MCF 10A (cell line): ENCODE measurements at regions of chr1 and their contacts with region 1.

Region 1: DNA sequence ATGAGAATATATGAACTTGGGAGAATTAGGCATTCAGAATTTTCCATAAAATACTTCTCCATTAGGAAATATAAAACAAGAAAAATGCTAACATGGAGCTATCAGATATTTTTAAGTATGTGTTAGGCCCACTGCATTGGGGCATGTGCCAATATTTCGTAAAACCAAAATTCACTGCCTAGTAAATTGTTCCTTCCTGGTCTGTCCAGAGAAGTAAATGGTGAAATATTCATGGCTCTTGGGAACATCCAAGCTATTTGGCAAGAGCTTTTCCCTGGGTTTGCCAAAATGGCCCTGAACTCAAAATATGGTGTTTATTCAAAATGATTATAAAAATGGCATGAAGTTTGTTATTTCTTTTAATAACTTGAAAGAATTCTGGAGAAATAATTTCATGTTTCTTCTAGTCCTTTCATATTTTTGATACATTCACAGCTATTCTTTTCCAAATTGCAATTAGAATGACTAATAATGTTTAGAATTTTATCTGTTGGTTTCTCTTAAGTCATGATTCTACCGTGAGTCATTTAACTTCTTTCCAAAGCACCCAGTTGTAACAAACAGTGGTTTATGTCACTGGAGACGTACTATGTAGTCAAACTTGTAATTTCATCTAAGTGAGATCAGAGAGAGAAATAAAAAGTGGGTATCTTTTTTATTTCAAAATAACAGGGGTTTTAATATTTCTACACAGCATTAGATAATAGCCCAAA is 25.7 kb upstream of the SLC19A2 start:
- DNase-seq: peak; percentile 86
- H3K4me3 Mint-ChIP-seq: peak overlapping the region; percentile 5
- H3K27ac Mint-ChIP-seq: peak overlapping the region; percentile 86
- H3K4me1 Mint-ChIP-seq: peaks cover 62% of the 10 kb centered on the region
- H3K27me3 Mint-ChIP-seq: no peaks in the 10 kb centered on the region
- CTCF ChIP-seq: no peak

Region 2: GRCh38 chr1:169288011-169288414 is 223.5 kb before region 1 on chr1:
- CTCF ChIA-PET with region 1: no interaction called
- POLR2A ChIA-PET with region 1: no interaction called
- intact Hi-C with region 1: no loop called
- DNase-seq: peak; percentile 18
- H3K4me3 Mint-ChIP-seq: no peak overlapping the region
- H3K27ac Mint-ChIP-seq: no peak overlapping the region
- H3K4me1 Mint-ChIP-seq: peaks cover 17% of the 10 kb centered on the region
- H3K27me3 Mint-ChIP-seq: no peaks in the 10 kb centered on the region
- CTCF ChIP-seq: no peak

Region 3: GRCh38 chr1:169495046-169495775 is 16.3 kb before region 1 on chr1:
- CTCF ChIA-PET with region 1: interaction called, 13 read pairs
- POLR2A ChIA-PET with region 1: interaction called, 56 read pairs
- intact Hi-C with region 1: no loop called
- DNase-seq: peak; percentile 31
- H3K4me3 Mint-ChIP-seq: no peak overlapping the region
- H3K27ac Mint-ChIP-seq: peak overlapping the region; percentile 52
- H3K4me1 Mint-ChIP-seq: peaks cover 18% of the 10 kb centered on the region
- H3K27me3 Mint-ChIP-seq: no peaks in the 10 kb centered on the region
- CTCF ChIP-seq: no peak

Region 4: GRCh38 chr1:169731446-169731845 is 220.0 kb after region 1 on chr1:
- CTCF ChIA-PET with region 1: no interaction called
- POLR2A ChIA-PET with region 1: no interaction called
- intact Hi-C with region 1: no loop called
- DNase-seq: peak; percentile 21
- H3K4me3 Mint-ChIP-seq: no peak overlapping the region
- H3K27ac Mint-ChIP-seq: no peak overlapping the region
- H3K4me1 Mint-ChIP-seq: no peaks in the 10 kb centered on the region
- H3K27me3 Mint-ChIP-seq: peaks cover 44% of the 10 kb centered on the region
- CTCF ChIP-seq: no peak

Region 5: GRCh38 chr1:169816622-169817021 is 305.1 kb after region 1 on chr1:
- CTCF ChIA-PET with region 1: no interaction called
- POLR2A ChIA-PET with region 1: no interaction called
- intact Hi-C with region 1: no loop called
- DNase-seq: no peak
- H3K4me3 Mint-ChIP-seq: no peak overlapping the region
- H3K27ac Mint-ChIP-seq: no peak overlapping the region
- H3K4me1 Mint-ChIP-seq: no peaks in the 10 kb centered on the region
- H3K27me3 Mint-ChIP-seq: no peaks in the 10 kb centered on the region
- CTCF ChIP-seq: no peak